HepG2 (cell line): ENCODE measurements at regions of chr16 and their contacts with region 1.

Region 1: DNA sequence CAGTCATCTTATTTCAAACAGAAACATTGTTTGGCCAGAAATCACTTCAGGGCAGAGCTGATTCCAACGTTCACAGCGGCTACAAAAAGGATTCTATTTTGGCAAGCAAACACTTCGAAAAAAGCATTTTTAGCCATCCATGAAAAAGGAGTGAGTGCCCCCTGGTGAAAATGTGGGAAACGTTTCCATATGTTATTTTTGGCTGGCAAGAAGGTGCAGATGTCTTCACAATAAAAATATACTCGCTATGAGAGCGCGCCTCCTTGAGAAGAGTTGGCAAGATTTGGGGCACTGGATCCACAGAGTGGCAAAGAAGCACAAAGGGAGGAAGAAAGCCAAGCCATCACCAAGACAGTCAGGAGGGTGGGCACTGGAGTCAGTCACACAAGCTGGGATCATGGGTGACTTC is 191.1 kb downstream of the CHD9NB start:
- DNase-seq: peak; percentile 65
- ATAC-seq: peak; percentile 78
- H3K4me3 ChIP-seq: no peak overlapping the region
- H3K27ac ChIP-seq: no peak overlapping the region
- H3K4me1 ChIP-seq: peaks cover 12% of the 10 kb centered on the region
- H3K27me3 ChIP-seq: peaks cover 0 to 5% of the 10 kb centered on the region in 2 experiments; a peak in 1 of 5 replicates
- CTCF ChIP-seq: peak; percentile 89
- EP300 ChIP-seq: 0 out of 4 replicates have a peak, but pooled peaks of 1 of the 2 experiments have one; percentile 19
- POLR2A ChIP-seq: no peak
- RAD21 ChIP-seq: peak; percentile 91

Region 2: DNA sequence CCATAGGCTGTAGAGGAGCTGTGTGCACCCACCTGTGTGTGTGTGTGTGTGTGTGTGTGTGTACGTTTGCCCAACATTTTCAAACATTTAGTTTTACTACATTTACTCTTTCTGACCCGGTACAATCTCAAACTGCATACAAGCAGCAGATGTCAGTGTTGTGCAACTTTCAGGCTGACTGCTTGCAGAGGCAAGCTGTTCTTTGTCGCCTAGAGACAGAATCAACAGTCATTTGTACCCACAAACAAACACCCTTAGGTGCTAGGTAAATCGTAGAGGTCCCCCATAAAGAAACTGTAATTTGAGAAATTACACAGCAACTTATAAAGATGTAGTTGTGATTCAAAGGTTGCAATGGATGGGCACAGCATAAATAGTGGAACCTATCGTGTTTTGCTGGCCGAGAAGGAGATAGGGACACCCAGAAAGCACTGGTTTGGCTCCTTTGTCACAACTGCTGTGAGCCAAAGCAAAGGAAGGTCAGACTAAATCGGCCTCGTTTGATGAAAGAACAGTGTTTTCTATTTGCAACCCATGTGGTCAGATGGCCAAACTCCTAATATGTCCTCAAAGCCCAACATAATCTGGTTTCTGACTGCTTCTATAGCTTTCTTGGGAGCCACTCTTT is 793.1 kb before region 1 on chr16:
- CTCF ChIA-PET with region 1: interaction called, 11 read pairs
- POLR2A ChIA-PET with region 1: no interaction called
- in situ Hi-C with region 1: loop called (anchors 5 kb)
- intact Hi-C with region 1: loop called (anchors 1 kb)
- DNase-seq: peak; percentile 35
- ATAC-seq: peak; percentile 72
- H3K4me3 ChIP-seq: no peak overlapping the region
- H3K27ac ChIP-seq: no peak overlapping the region
- H3K4me1 ChIP-seq: no peaks in the 10 kb centered on the region
- H3K27me3 ChIP-seq: no peaks in the 10 kb centered on the region
- CTCF ChIP-seq: peak; percentile 80
- EP300 ChIP-seq: no peak
- POLR2A ChIP-seq: no peak
- RAD21 ChIP-seq: peak; percentile 55; the same call in 1 of the 2 replicates

Region 3: GRCh38 chr16:52191531-52192134 is 670.0 kb before region 1 on chr16:
- CTCF ChIA-PET with region 1: interaction called, 31 read pairs
- POLR2A ChIA-PET with region 1: interaction called, 3 read pairs
- in situ Hi-C with region 1: loop called (anchors 5 kb)
- intact Hi-C with region 1: loop called (anchors 1 kb)
- DNase-seq: peak; percentile 76
- ATAC-seq: peak; percentile 74
- H3K4me3 ChIP-seq: no peak overlapping the region
- H3K27ac ChIP-seq: no peak overlapping the region
- H3K4me1 ChIP-seq: peaks cover 9% of the 10 kb centered on the region
- H3K27me3 ChIP-seq: no peaks in the 10 kb centered on the region
- CTCF ChIP-seq: peak; percentile 97
- EP300 ChIP-seq: no peak
- POLR2A ChIP-seq: no peak
- RAD21 ChIP-seq: peak; percentile 90

Region 4: DNA sequence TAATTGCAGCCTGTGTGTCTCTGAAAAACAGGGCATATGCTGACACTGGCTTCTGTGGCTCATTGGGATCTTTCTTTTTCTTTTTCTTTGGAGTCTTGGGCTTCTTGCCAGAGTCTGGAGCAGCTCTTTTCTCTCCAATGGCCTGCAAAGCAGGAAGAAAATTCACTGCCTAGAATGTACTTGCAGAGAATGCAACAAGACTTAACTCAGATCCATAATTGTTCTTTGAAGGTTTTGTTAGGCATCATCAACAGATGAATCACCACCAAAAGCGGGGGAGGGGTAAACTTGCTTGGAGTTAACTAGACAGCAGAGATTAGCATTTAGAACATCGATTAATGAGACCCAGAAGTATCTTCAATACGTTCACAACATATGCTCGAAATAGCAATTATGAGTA is 415.5 kb before region 1 on chr16:
- CTCF ChIA-PET with region 1: no interaction called
- POLR2A ChIA-PET with region 1: no interaction called
- in situ Hi-C with region 1: loop called (anchors 25 kb)
- intact Hi-C with region 1: no loop called
- DNase-seq: peak; percentile 16
- ATAC-seq: no peak
- H3K4me3 ChIP-seq: no peak overlapping the region
- H3K27ac ChIP-seq: no peak overlapping the region
- H3K4me1 ChIP-seq: peaks cover 18% of the 10 kb centered on the region
- H3K27me3 ChIP-seq: no peaks in the 10 kb centered on the region
- CTCF ChIP-seq: no peak
- EP300 ChIP-seq: no peak
- POLR2A ChIP-seq: no peak
- RAD21 ChIP-seq: no peak

Region 5: GRCh38 chr16:52799149-52799548 is 62.5 kb before region 1 on chr16:
- CTCF ChIA-PET with region 1: no interaction called
- POLR2A ChIA-PET with region 1: no interaction called
- in situ Hi-C with region 1: no loop called
- intact Hi-C with region 1: no loop called
- DNase-seq: no peak
- ATAC-seq: no peak
- H3K4me3 ChIP-seq: no peak overlapping the region
- H3K27ac ChIP-seq: no peak overlapping the region
- H3K4me1 ChIP-seq: no peaks in the 10 kb centered on the region
- H3K27me3 ChIP-seq: no peaks in the 10 kb centered on the region
- CTCF ChIP-seq: no peak
- EP300 ChIP-seq: no peak
- POLR2A ChIP-seq: no peak
- RAD21 ChIP-seq: no peak

Region 6: DNA sequence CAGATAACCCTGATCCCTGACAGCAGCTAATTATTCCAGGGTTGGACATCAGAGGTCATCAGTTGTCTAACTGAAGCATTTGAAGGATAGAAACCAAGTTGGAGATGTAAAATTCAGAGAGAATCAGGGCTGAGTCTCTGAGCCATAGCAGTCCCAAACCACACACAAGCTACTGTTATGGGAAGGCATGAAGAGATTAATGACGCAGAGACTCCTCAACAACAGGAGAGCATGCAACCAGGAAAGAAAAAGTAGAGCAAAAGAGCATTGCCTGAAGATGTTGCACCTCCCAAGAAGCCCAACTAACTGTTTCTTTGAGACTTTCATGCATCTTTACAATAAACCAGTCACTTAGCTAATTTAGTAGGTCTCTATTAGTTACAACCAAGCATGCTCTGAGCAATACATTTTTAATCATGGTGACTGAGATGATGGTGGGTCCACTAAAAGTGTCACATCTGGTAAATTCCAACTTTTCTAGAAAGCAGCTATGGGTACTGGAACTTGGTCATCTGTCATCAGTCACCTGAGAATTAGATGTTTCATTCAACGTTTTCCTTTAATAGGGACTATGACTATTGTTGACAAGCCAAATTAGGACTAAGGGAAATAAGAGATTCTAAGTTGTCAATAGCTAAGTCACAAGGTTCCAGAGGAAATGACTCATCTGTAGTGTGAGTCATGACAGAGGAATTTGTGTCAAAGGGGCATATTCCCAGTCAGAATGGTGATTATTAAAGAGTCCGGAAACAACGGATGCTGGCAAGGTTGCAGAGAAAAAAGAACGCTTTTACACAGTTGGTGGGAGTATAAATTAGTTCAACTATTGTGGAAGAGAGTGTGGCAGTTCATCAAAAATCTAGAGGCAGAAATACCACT is 48.7 kb before region 1 on chr16:
- CTCF ChIA-PET with region 1: no interaction called
- POLR2A ChIA-PET with region 1: no interaction called
- in situ Hi-C with region 1: no loop called
- intact Hi-C with region 1: no loop called
- DNase-seq: peak; percentile 84
- ATAC-seq: peak; percentile 79
- H3K4me3 ChIP-seq: no peak overlapping the region
- H3K27ac ChIP-seq: no peak overlapping the region
- H3K4me1 ChIP-seq: peaks cover 28% of the 10 kb centered on the region
- H3K27me3 ChIP-seq: no peaks in the 10 kb centered on the region; a peak in 1 of 5 replicates
- CTCF ChIP-seq: no peak
- EP300 ChIP-seq: peak in 1 of 2 experiments; percentile 80; a peak in 2 of 4 replicates
- POLR2A ChIP-seq: no peak
- RAD21 ChIP-seq: no peak

Region 7: GRCh38 chr16:52874042-52874441 is 12.4 kb after region 1 on chr16:
- CTCF ChIA-PET with region 1: no interaction called
- POLR2A ChIA-PET with region 1: no interaction called
- in situ Hi-C with region 1: no loop called
- intact Hi-C with region 1: no loop called
- DNase-seq: no peak
- ATAC-seq: no peak
- H3K4me3 ChIP-seq: no peak overlapping the region
- H3K27ac ChIP-seq: no peak overlapping the region
- H3K4me1 ChIP-seq: 0 out of 2 replicates have a peak, but pooled peaks cover 5% of the 10 kb centered on the region
- H3K27me3 ChIP-seq: peaks cover 0 to 10% of the 10 kb centered on the region in 2 experiments; a peak in 1 of 5 replicates
- CTCF ChIP-seq: no peak
- EP300 ChIP-seq: no peak
- POLR2A ChIP-seq: no peak
- RAD21 ChIP-seq: no peak